ENCODE measurements at regions of chr16 and their contacts with region 1.

Region 1: GRCh38 chr16:24568392-24568791 is 29.0 kb downstream of the RBBP6 start:
- DNase-seq: no peak
- ATAC-seq: no peak
- H3K4me3 ChIP-seq: no peak overlapping the region
- H3K27ac ChIP-seq: no peak overlapping the region
- H3K4me1 ChIP-seq: no peaks in the 10 kb centered on the region
- H3K27me3 ChIP-seq: no peaks in the 10 kb centered on the region
- CTCF ChIP-seq: peak in 3 of 4 donors; percentile 27 to 32 (median 32)
- POLR2A ChIP-seq: no peak

Region 2: DNA sequence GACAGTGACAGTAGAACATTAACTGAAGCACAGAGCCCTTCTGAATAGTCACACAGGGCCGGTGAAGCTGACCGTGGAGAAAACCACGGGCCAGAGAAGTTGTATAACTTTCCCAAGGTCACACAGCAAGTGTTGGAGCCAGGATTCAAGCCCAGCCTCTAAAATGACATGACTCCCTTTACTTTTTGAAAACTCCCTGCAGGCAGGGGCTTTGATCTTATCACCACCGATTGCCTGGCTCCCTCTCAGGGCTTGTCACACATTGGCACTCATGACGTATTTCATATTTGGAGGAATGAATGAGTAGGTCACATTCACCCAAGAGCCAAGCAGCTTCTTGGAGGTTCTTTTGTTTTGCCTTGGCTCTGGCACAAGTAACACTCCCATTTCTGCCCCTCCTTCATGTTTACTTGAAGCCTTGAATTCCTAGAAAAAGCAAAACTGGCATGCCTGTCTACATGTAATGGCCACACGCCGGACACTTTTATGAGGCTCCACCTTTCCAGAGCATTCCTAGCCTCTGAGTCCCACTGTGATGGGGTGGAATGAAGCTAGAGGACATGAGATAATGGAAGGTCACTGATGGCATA is 42.3 kb before region 1 on chr16:
- intact Hi-C with region 1: no loop called
- DNase-seq: no peak
- ATAC-seq: no peak
- H3K4me3 ChIP-seq: no peak overlapping the region
- H3K27ac ChIP-seq: no peak overlapping the region
- H3K4me1 ChIP-seq: peaks cover 0 to 4% (median 0%) of the 10 kb centered on the region in 4 donors
- H3K27me3 ChIP-seq: no peaks in the 10 kb centered on the region
- CTCF ChIP-seq: no peak
- POLR2A ChIP-seq: no peak

Region 3: DNA sequence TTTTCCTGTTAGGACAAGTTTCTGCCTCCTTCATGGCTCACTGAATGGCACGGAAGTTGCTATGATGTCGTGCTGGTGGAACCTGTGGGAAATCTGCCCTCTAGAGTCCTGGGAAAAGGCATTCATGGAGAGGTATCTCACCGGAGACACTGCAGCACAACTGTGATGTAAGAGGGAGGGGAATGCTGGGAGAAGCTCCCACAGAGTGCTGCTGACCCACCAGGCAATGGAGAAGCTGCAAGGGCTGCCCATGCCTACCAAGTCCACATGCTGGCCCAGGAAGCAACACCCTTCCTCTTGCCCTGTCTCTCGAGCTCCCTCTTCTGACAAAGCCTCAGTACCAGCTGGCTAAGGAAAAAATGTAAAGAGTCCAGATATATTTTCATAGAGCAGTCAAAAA is 232.2 kb after region 1 on chr16:
- intact Hi-C with region 1: loop called in 1 of 2 experiments (anchors 10 kb)
- DNase-seq: no peak
- ATAC-seq: peak; percentile 60 to 73 (median 70)
- H3K4me3 ChIP-seq: no peak overlapping the region
- H3K27ac ChIP-seq: no peak overlapping the region
- H3K4me1 ChIP-seq: no peaks in the 10 kb centered on the region
- H3K27me3 ChIP-seq: no peaks in the 10 kb centered on the region
- CTCF ChIP-seq: peak; percentile 16 to 38 (median 24)
- POLR2A ChIP-seq: no peak